ENCODE measurements at regions of chr11 and their contacts with region 1.

Region 1: DNA sequence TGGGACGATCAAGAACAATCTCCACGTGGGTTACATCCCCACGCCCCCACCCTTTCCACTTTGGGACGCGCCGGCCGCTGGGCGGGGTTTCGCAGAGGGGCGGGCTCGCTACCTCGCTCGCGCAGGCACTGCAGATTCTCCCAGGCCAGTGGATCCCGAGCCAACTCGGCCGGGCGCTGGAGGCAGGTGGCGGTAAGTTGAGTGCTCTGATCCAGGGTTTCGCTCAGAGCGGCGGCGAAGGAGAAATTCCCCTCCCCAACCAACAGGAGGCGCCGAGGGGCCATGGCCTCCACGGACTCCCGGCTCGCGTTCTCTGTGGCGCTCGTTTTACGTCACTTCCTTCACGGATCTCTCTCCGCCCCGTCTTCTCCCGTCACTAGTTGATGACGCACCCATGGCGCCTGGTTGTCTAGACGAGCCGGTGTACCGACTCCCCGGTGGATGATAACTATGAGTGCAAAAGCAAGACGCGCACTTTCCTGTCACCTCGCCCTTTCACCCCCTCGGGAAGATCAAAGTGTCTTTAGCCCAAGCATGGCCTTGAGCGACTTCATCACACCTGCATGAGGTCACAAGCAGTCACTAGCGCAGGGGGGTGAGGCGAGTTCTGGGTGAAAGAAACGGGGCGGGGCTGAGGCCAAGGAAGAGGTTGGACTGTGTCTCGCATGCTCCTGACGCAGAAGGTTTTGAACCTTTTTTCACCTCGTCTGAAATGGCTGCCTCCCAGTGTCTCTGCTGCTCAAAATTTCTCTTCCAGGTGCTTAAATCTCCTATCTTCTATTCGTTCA is at the starts of genes CFAP68 and FDXACB1:
- DNase-seq: peak; percentile 98
- H3K4me3 Mint-ChIP-seq: peak within 1 kb of the TSS; percentile 95
- H3K27ac Mint-ChIP-seq: peak within 1 kb of the TSS; percentile 99
- H3K4me1 Mint-ChIP-seq: peaks cover 10% of the 10 kb centered on the region
- H3K27me3 Mint-ChIP-seq: no peaks in the 10 kb centered on the region
- total RNA-seq, gene CFAP68: 22.6 and 25.5 TPM in 2 replicates
- total RNA-seq, gene FDXACB1: 8.8 and 10.0 TPM in 2 replicates

Region 2: DNA sequence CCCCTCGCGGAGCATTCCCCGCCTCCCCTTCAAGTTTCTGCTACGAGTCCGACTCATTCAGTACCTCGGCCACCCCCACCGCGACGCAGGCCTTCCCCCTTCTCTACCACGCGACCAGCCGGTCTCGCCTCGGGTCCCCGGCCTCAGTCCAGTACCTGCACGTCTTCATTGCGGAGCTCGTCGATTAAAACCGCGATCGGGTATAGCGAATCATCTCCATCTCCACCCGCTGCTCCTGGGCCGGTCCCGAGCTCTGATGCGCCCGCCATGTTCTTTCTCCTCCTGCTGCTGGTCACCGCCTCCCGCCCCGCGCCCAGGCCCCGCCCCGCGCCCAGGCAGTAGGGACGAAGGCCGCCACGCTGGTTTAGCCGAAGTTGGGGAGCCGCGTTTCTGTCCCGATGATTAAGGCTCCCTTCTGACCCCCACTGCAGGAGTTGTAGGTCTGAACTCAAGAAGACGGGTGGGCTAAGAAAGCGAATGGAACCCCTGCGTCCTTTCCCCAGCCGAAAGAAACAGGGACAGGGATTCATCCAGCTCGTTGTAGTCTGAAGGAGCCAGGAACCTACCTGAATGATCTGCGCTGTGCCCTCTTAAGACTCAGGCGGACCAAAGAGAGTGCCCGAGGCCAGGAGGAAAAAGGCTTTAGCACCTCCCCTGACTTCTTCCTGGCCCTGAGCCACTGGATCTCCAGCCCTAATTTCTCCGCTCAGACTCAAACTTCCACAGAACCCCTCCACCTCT is 112.8 kb before region 1 on chr11 and contains the start of gene PPP2R1B:
- intact Hi-C with region 1: loop called (anchors 5 kb)
- DNase-seq: peak; percentile 91
- H3K4me3 Mint-ChIP-seq: peak within 1 kb of the TSS; percentile 85
- H3K27ac Mint-ChIP-seq: peak within 1 kb of the TSS; percentile 98
- H3K4me1 Mint-ChIP-seq: peaks cover 31% of the 10 kb centered on the region
- H3K27me3 Mint-ChIP-seq: no peaks in the 10 kb centered on the region
- total RNA-seq, gene PPP2R1B: 63.2 and 63.6 TPM in 2 replicates

Region 3: DNA sequence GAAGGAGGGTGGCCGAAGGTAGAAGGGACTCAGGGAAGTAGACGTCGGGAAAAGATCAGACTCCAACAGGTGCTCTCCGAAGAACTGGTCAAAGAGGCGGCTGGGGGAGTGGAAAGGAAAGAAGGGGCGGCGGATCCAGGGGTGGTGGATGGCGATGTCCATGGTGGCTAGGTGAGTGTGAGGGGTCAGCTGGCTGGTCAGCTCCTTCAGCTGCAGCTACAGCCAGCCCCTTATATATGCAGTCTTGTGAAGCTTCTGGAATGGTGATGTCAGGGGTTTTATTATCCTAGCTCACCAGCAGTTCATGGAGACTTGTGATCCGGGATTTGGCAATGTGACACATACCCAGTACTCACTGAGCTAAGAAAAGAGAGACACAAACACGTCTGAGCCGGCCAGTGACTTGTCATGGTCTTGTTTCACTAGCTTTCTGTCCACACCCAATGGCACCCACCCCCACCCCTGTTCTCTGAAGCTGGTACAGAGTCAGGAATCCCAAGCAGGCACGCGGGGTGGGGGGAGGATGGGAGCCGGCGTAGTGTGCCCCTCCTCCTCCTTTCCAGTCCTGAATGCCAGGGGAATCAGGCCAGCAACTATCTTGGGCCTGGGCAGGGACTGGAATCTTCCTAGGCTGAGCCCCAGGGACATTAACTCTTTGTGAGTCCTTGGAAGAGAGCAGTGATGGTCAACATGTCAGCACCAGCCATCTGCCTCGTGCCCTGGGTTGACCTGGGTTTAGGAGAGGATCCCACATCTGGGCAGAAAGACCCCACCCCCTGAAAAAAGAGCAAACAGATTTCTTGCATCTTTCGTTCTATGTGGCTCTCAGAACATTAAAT is 32.7 kb after region 1 on chr11 and contains the start of gene CRYAB:
- intact Hi-C with region 1: no loop called
- DNase-seq: no peak
- H3K4me3 Mint-ChIP-seq: no peak within 1 kb of the TSS
- H3K27ac Mint-ChIP-seq: no peak within 1 kb of the TSS
- H3K4me1 Mint-ChIP-seq: no peaks in the 10 kb centered on the region
- H3K27me3 Mint-ChIP-seq: peaks cover 61% of the 10 kb centered on the region
- total RNA-seq, gene CRYAB: not detected in 2 replicates

Region 4: DNA sequence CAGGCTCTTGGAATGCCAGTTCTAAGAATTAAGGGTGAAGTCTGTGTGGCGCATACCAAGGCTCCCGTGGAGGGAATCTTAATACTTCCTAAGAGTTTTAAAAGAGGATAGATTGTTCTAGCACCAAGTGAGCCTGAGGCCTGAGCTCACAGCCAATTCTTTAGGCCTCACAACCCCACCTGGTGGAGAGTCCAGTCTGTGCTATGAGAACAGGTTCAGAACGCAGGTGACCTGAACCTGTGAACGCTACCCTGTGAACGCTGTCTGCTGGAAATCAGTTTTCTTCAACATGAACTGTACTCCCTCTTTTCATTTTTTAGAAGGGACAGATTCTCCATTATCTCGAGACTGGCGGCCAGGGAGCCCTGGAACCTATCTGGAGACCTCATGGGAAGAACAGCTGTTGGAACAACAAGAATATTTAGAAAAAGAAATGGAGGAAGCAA is 103.0 kb after region 1 on chr11:
- intact Hi-C with region 1: loop called (anchors 2 kb)
- DNase-seq: peak; percentile 85
- H3K4me3 Mint-ChIP-seq: no peak overlapping the region
- H3K27ac Mint-ChIP-seq: no peak overlapping the region
- H3K4me1 Mint-ChIP-seq: peaks cover 7% of the 10 kb centered on the region
- H3K27me3 Mint-ChIP-seq: peaks cover 3% of the 10 kb centered on the region

Region 5: DNA sequence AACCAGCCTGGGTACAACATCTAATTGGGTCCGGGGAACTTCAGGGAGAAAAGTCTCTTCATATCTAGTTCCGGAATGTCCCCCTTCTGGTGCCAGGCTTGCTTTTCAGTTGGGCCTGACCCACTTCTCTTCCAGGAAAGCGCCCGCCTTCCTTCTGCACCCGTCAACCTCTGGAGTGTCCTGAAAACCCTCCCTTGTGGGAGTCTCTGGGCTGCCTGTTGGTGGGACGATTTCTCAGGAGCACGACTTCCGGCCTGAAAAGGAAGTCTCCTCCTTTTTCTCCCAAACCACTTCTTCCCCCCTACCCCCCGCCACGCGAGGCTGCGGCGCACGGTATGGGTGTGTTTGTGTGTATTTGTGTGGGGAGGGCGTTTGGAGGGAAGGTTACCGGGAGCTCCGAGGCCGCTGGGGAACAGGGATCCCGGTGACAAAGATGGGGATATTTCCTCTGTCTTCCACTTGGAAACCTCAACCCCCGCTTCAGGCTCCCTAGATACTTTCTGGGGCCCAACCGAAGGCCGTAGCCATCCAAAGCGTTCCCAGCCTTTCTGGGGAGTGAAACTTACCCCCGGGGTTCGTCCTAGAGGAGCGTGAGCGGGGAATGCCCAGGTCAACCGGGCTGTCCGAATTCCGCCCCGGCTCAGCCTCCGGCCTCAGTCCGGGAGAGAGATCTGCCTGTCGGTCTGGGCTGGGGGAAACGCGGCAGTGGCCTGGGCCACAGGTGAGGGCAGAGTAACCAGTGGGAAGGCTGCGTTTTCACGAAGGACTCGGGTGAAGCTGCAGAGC is 195.2 kb after region 1 on chr11 and contains the start of gene NKAPD1:
- intact Hi-C with region 1: loop called (anchors 1 kb)
- DNase-seq: peak; percentile 95
- H3K4me3 Mint-ChIP-seq: peak within 1 kb of the TSS; percentile 95
- H3K27ac Mint-ChIP-seq: peak within 1 kb of the TSS; percentile 96
- H3K4me1 Mint-ChIP-seq: peaks cover 29% of the 10 kb centered on the region
- H3K27me3 Mint-ChIP-seq: peaks cover 4% of the 10 kb centered on the region
- total RNA-seq, gene NKAPD1: 24.4 and 27.0 TPM in 2 replicates

Region 6: DNA sequence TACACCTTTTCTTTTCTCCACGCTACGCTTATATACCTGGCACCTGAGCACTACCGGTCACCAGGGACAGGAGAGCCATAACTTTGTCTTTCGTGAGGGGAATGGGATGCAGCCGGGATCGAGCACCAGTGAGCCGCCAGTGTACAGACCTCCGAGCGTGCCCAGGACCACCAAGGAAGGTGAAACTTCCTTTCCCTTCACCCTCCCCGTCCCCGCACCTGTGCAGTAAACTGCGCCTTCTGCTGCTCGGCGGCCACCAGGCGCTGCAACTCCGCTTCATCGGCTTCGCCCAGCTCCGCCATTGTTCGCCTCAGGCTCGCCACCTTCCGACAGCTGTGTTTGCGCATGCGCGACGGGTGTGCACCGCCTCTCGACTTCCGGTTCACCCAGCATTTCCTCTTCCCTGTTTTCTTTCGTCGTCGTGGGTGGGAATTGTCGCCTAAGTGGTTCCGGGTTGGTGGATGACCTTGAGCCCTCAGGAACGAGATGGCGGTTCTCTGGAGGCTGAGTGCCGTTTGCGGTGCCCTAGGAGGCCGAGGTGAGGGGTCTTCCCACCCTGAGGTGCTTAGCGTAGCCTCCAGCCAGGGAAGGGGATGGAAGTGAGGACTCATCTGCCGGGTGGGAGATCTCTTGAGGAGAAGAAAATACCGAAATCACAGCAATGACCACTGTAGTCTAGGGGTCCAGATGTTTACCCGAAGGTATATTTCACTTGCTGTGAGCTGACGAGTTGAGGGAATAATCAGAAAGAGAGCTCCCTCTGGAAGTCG is 207.6 kb after region 1 on chr11 and contains the starts of genes SDHD and TIMM8B:
- intact Hi-C with region 1: loop called (anchors 1 kb)
- DNase-seq: peak; percentile 99
- H3K4me3 Mint-ChIP-seq: peak within 1 kb of the TSS; percentile 100
- H3K27ac Mint-ChIP-seq: peak within 1 kb of the TSS; percentile 99
- H3K4me1 Mint-ChIP-seq: peaks cover 52% of the 10 kb centered on the region
- H3K27me3 Mint-ChIP-seq: peaks cover 2% of the 10 kb centered on the region
- total RNA-seq, gene SDHD: 95.2 and 101 TPM in 2 replicates
- total RNA-seq, gene TIMM8B: 86.3 and 89.7 TPM in 2 replicates

Measured in activated CD4-positive, alpha-beta T cell treated with anti-CD3 and anti-CD28 coated beads, Interleukin-2, amount 10 ng/mL, durations not matched to agents 24 days and 14 days (primary cell).